Caki2 (cell line): ENCODE measurements at regions of chr6 and their contacts with region 1.

Region 1: DNA sequence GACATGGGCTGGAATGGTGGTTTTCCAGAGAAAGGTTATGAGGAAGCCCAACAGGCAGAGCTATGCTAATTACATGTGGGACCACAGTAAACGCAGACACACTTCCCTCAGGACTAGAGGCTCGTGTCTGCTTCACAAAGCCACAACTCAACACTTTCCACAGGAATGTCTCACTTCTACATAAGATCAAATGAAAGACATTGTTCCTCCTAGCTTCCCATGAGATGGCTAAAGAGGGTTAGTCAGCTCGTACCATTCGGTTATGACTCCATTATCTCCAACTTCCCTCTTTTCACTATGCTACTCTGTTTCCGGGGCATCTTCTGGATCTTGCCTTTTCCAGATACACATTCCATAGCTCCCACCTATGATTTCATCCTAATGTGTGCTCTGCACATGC is 29.1 kb upstream of the ZC3H12D start:
- DNase-seq: no peak

Region 2: GRCh38 chr6:149028767-149029405 is 485.0 kb before region 1 on chr6:
- in situ Hi-C with region 1: loop called (anchors 25 kb)
- DNase-seq: peak; percentile 53